Activated naive CD4-positive, alpha-beta T cell treated with anti-CD3 and anti-CD28 coated beads, Interleukin-2, amount 10 ng/mL, durations not matched to agents 7 days and 5 days (primary cell): ENCODE measurements at regions of chr6 and their contacts with region 1.

Region 1: GRCh38 chr6:44431118-44431725 is 43.7 kb downstream of the CDC5L start:
- DNase-seq: peak; percentile 61
- H3K4me3 Mint-ChIP-seq: no peak overlapping the region
- H3K27ac Mint-ChIP-seq: no peak overlapping the region
- H3K4me1 Mint-ChIP-seq: no peaks in the 10 kb centered on the region
- H3K27me3 Mint-ChIP-seq: no peaks in the 10 kb centered on the region

Region 2: GRCh38 chr6:44177678-44178423 is 253.4 kb before region 1 on chr6:
- CTCF ChIA-PET with region 1: no interaction called
- DNase-seq: no peak
- H3K4me3 Mint-ChIP-seq: no peak overlapping the region
- H3K27ac Mint-ChIP-seq: no peak overlapping the region
- H3K4me1 Mint-ChIP-seq: peaks cover 14% of the 10 kb centered on the region
- H3K27me3 Mint-ChIP-seq: peaks cover 42% of the 10 kb centered on the region

Region 3: GRCh38 chr6:44404022-44404714 is 27.1 kb before region 1 on chr6:
- CTCF ChIA-PET with region 1: no interaction called
- DNase-seq: no peak
- H3K4me3 Mint-ChIP-seq: no peak overlapping the region
- H3K27ac Mint-ChIP-seq: no peak overlapping the region
- H3K4me1 Mint-ChIP-seq: peaks cover 14% of the 10 kb centered on the region
- H3K27me3 Mint-ChIP-seq: no peaks in the 10 kb centered on the region

Region 4: GRCh38 chr6:44456070-44456965 is 25.1 kb after region 1 on chr6:
- CTCF ChIA-PET with region 1: interaction called, 11 read pairs
- DNase-seq: peak; percentile 47
- H3K4me3 Mint-ChIP-seq: no peak overlapping the region
- H3K27ac Mint-ChIP-seq: no peak overlapping the region
- H3K4me1 Mint-ChIP-seq: no peaks in the 10 kb centered on the region
- H3K27me3 Mint-ChIP-seq: peaks cover 31% of the 10 kb centered on the region